ENCODE measurements at regions of chr2 and their contacts with region 1.

Region 1: GRCh38 chr2:180980106-180980942 is at the start of gene UBE2E3:
- DNase-seq: peak; percentile 85
- H3K4me3 Mint-ChIP-seq: peak within 1 kb of the TSS; percentile 95
- H3K27ac Mint-ChIP-seq: peak within 1 kb of the TSS; percentile 91
- H3K4me1 Mint-ChIP-seq: peaks cover 29% of the 10 kb centered on the region
- H3K27me3 Mint-ChIP-seq: no peaks in the 10 kb centered on the region
- total RNA-seq, gene UBE2E3: 25.8 to 29.5 TPM

Region 2: GRCh38 chr2:180125245-180125962 is 854.9 kb before region 1 on chr2:
- CTCF ChIA-PET with region 1: no interaction called
- intact Hi-C with region 1: loop called (anchors 1 kb)
- DNase-seq: peak; percentile 64
- H3K4me3 Mint-ChIP-seq: no peak overlapping the region
- H3K27ac Mint-ChIP-seq: no peak overlapping the region
- H3K4me1 Mint-ChIP-seq: peaks cover 3% of the 10 kb centered on the region
- H3K27me3 Mint-ChIP-seq: peaks cover 10% of the 10 kb centered on the region

Region 3: GRCh38 chr2:180991820-180992219 is 11.5 kb after region 1 on chr2:
- CTCF ChIA-PET with region 1: interaction called, 10 read pairs
- intact Hi-C with region 1: no loop called
- DNase-seq: no peak
- H3K4me3 Mint-ChIP-seq: no peak overlapping the region
- H3K27ac Mint-ChIP-seq: no peak overlapping the region
- H3K4me1 Mint-ChIP-seq: peaks cover 24% of the 10 kb centered on the region
- H3K27me3 Mint-ChIP-seq: no peaks in the 10 kb centered on the region

Region 4: GRCh38 chr2:181790716-181791649 is 810.7 kb after region 1 on chr2:
- CTCF ChIA-PET with region 1: no interaction called
- intact Hi-C with region 1: loop called (anchors 2 kb)
- DNase-seq: peak; percentile 55
- H3K4me3 Mint-ChIP-seq: no peak overlapping the region
- H3K27ac Mint-ChIP-seq: no peak overlapping the region
- H3K4me1 Mint-ChIP-seq: peaks cover 19% of the 10 kb centered on the region
- H3K27me3 Mint-ChIP-seq: peaks cover 12% of the 10 kb centered on the region

Measured in activated naive CD4-positive, alpha-beta T cell treated with anti-CD3 and anti-CD28 coated beads for 36 hours (primary cell).